Activated naive CD8-positive, alpha-beta T cell treated with anti-CD3 and anti-CD28 coated beads, Interleukin-2, amount 10 ng/mL, durations not matched to agents 7 days and 5 days (primary cell): ENCODE measurements at regions of chr22 and their contacts with region 1.

Region 1: GRCh38 chr22:39414886-39415285 is 15.3 kb downstream of the TAB1 start:
- DNase-seq: no peak
- ATAC-seq: no peak
- H3K4me3 Mint-ChIP-seq: no peak overlapping the region
- H3K27ac Mint-ChIP-seq: no peak overlapping the region
- H3K4me1 Mint-ChIP-seq: peaks cover 41% of the 10 kb centered on the region
- H3K27me3 Mint-ChIP-seq: no peaks in the 10 kb centered on the region

Region 2: DNA sequence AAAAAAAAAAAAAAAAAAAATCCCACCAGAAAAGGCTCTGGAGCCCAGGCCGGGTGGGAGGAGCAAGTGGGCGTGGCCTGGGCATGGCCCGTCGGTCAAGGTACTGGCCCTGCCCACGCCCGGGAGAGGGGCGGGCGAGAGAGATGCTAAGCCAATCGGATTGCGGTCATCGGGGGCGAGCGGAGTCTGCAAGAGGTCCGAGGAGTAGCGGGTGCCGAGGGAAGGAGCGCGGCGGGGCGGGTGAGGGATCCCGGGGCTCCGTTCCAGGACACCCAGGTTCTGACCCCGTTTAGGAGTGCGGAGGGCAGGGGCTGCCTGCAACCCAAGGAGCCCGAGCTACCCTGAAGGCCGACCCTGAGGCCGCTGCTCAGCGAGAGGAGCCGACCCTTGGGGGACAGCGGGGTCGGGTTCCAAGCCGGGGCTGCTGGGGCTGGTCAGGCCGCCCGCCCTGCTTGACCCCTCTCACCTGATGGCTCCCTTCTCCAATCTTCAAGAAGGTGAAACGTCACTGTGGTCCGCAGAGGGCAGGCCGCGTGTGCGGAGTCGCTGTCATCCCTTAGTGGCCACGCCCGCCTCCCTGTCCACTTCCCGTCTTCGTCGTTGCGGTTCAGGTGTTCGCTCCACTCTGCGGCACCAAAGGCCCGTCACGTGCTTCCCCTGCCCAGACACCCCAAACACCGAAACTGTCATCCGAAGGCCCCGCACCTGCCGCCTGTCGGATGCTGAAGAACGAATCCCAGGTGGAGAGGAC is 26.4 kb before region 1 on chr22:
- POLR2A ChIA-PET with region 1: interaction called, 12 read pairs
- DNase-seq: peak; percentile 83
- ATAC-seq: peak; percentile 88
- H3K4me3 Mint-ChIP-seq: peak overlapping the region; percentile 72
- H3K27ac Mint-ChIP-seq: peak overlapping the region; percentile 78
- H3K4me1 Mint-ChIP-seq: peaks cover 12% of the 10 kb centered on the region
- H3K27me3 Mint-ChIP-seq: no peaks in the 10 kb centered on the region

Region 3: DNA sequence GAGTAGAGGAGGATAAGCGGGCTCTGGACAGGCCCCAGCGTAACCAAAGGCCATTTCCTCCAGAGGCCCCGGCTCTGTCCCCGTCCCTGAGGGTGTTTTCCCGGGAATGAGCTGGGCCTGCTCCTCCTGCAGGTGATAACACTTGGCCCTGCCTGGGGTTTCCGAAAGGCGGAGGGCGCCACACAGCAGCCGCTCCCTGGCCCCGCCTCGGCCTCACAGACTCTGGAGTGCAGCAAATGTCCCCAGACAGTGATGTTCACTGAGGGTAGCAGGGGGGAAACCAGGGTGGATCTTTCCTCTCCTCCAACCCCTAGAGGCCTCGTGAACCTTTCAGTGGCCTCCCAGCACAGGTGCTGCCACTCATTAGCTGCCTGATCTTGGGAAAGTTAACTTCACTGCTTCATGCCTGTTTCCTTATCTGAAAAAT is 31.4 kb after region 1 on chr22:
- POLR2A ChIA-PET with region 1: interaction called, 10 read pairs
- DNase-seq: peak; percentile 50
- ATAC-seq: peak; percentile 31
- H3K4me3 Mint-ChIP-seq: peak overlapping the region; percentile 86
- H3K27ac Mint-ChIP-seq: peak overlapping the region; percentile 98
- H3K4me1 Mint-ChIP-seq: peaks cover 42% of the 10 kb centered on the region
- H3K27me3 Mint-ChIP-seq: no peaks in the 10 kb centered on the region